ENCODE measurements at regions of chr15 and their contacts with region 1.

Region 1: GRCh38 chr15:42371125-42371524 is 11.8 kb downstream of the CAPN3 start:
- DNase-seq: no peak
- ATAC-seq: no peak
- H3K4me3 ChIP-seq: no peak overlapping the region
- H3K27ac ChIP-seq: no peak overlapping the region
- H3K4me1 ChIP-seq: no peaks in the 10 kb centered on the region
- H3K27me3 ChIP-seq: no peaks in the 10 kb centered on the region
- CTCF ChIP-seq: no peak
- EP300 ChIP-seq: no peak
- POLR2A ChIP-seq: no peak
- RAD21 ChIP-seq: no peak; the same call in 1 of the 2 replicates

Region 2: GRCh38 chr15:42385206-42385979 is 14.3 kb after region 1 on chr15:
- CTCF ChIA-PET with region 1: interaction called, 10 read pairs
- POLR2A ChIA-PET with region 1: no interaction called
- RAD21 ChIA-PET with region 1: no interaction called
- SMC1A ChIA-PET with region 1: interaction called, 5 read pairs
- in situ Hi-C with region 1: no loop called
- intact Hi-C with region 1: no loop called
- DNase-seq: no peak
- ATAC-seq: peak; percentile 93
- H3K4me3 ChIP-seq: no peak overlapping the region
- H3K27ac ChIP-seq: no peak overlapping the region
- H3K4me1 ChIP-seq: no peaks in the 10 kb centered on the region
- H3K27me3 ChIP-seq: no peaks in the 10 kb centered on the region
- CTCF ChIP-seq: peak; percentile 67 to 80 (median 74)
- EP300 ChIP-seq: no peak
- POLR2A ChIP-seq: no peak
- RAD21 ChIP-seq: peak; percentile 71

Measured in GM12878 (cell line).